Activated naive CD4-positive, alpha-beta T cell treated with anti-CD3 and anti-CD28 coated beads, Interleukin-2, amount 10 ng/mL, durations not matched to agents 7 days and 5 days (primary cell): ENCODE measurements at regions of chr12 and their contacts with region 1.

Region 1: DNA sequence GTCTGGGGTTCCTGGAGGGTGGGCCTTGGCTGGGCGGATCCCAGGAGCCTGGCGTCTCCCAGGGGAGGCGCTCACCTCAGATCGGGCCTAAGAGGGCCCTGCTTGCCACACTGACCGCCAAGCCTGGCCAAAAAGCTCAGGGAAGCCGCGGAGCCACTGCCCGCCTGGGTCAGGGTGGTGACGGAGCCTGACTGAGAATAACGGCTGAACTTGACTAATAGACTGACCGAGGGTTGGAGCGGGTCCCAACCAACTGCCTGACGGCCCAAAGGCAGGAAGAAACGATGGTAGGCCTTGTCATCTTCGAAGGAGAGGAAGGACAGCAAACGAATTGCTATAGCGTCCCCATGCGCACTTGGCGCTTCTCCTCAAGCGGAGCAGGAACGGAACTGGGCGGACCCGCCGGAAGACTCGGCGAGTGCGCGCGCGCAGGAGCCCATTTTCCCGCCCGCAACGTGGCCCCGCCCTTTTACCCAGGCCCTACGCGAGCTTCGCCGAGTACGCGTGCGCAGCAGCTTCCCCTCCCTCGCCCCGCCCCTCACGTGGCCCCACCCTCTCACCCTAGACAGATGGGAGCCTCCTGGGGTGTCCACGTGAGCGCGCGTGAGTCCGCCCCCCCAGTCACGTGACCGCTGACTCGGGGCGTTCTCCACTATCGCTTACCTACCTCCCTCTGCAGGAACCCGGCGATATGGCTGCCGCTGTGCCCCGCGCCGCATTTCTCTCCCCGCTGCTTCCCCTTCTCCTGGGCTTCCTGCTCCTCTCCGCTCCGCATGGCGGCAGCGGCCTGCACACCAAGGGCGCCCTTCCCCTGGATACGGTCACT is at the starts of genes ERP29 and TMEM116:
- DNase-seq: peak; percentile 100
- H3K4me3 Mint-ChIP-seq: peak within 1 kb of the TSS; percentile 80
- H3K27ac Mint-ChIP-seq: peak within 1 kb of the TSS; percentile 92
- H3K4me1 Mint-ChIP-seq: peaks cover 58% of the 10 kb centered on the region
- H3K27me3 Mint-ChIP-seq: no peaks in the 10 kb centered on the region

Region 2: GRCh38 chr12:111720457-111720856 is 292.5 kb before region 1 on chr12:
- CTCF ChIA-PET with region 1: no interaction called
- DNase-seq: no peak
- H3K4me3 Mint-ChIP-seq: no peak overlapping the region
- H3K27ac Mint-ChIP-seq: no peak overlapping the region
- H3K4me1 Mint-ChIP-seq: no peaks in the 10 kb centered on the region
- H3K27me3 Mint-ChIP-seq: no peaks in the 10 kb centered on the region

Region 3: GRCh38 chr12:111942557-111942956 is 70.4 kb before region 1 on chr12:
- CTCF ChIA-PET with region 1: interaction called, 65 read pairs
- DNase-seq: no peak
- H3K4me3 Mint-ChIP-seq: no peak overlapping the region
- H3K27ac Mint-ChIP-seq: peak overlapping the region; percentile 26
- H3K4me1 Mint-ChIP-seq: peaks cover 25% of the 10 kb centered on the region
- H3K27me3 Mint-ChIP-seq: no peaks in the 10 kb centered on the region

Region 4: GRCh38 chr12:111953455-111953854 is 59.5 kb before region 1 on chr12:
- CTCF ChIA-PET with region 1: interaction called, 10 read pairs
- DNase-seq: no peak
- H3K4me3 Mint-ChIP-seq: no peak overlapping the region
- H3K27ac Mint-ChIP-seq: no peak overlapping the region
- H3K4me1 Mint-ChIP-seq: peaks cover 39% of the 10 kb centered on the region
- H3K27me3 Mint-ChIP-seq: no peaks in the 10 kb centered on the region

Region 5: GRCh38 chr12:111993292-111994150 is 19.5 kb before region 1 on chr12:
- CTCF ChIA-PET with region 1: interaction called, 23 read pairs
- DNase-seq: peak; percentile 66
- H3K4me3 Mint-ChIP-seq: peak overlapping the region; percentile 84
- H3K27ac Mint-ChIP-seq: peak overlapping the region; percentile 94
- H3K4me1 Mint-ChIP-seq: peaks cover 74% of the 10 kb centered on the region
- H3K27me3 Mint-ChIP-seq: no peaks in the 10 kb centered on the region

Region 6: GRCh38 chr12:112001576-112001975 is 11.4 kb before region 1 on chr12:
- CTCF ChIA-PET with region 1: interaction called, 18 read pairs
- DNase-seq: no peak
- H3K4me3 Mint-ChIP-seq: peak overlapping the region; percentile 67
- H3K27ac Mint-ChIP-seq: peak overlapping the region; percentile 83
- H3K4me1 Mint-ChIP-seq: peaks cover 75% of the 10 kb centered on the region
- H3K27me3 Mint-ChIP-seq: no peaks in the 10 kb centered on the region